Activated CD4-positive, alpha-beta memory T cell treated with anti-CD3 and anti-CD28 coated beads for 36 hours (primary cell): ENCODE measurements at regions of chr9 and their contacts with region 1.

Region 1: GRCh38 chr9:38620483-38621433 is at the start of gene ANKRD18A:
- DNase-seq: peak; percentile 88
- H3K4me3 Mint-ChIP-seq: peak within 1 kb of the TSS; percentile 80
- H3K27ac Mint-ChIP-seq: peak within 1 kb of the TSS; percentile 79
- H3K4me1 Mint-ChIP-seq: peaks cover 10% of the 10 kb centered on the region
- H3K27me3 Mint-ChIP-seq: peaks cover 2% of the 10 kb centered on the region
- total RNA-seq, gene ANKRD18A: 8.3 to 8.6 TPM

Region 2: DNA sequence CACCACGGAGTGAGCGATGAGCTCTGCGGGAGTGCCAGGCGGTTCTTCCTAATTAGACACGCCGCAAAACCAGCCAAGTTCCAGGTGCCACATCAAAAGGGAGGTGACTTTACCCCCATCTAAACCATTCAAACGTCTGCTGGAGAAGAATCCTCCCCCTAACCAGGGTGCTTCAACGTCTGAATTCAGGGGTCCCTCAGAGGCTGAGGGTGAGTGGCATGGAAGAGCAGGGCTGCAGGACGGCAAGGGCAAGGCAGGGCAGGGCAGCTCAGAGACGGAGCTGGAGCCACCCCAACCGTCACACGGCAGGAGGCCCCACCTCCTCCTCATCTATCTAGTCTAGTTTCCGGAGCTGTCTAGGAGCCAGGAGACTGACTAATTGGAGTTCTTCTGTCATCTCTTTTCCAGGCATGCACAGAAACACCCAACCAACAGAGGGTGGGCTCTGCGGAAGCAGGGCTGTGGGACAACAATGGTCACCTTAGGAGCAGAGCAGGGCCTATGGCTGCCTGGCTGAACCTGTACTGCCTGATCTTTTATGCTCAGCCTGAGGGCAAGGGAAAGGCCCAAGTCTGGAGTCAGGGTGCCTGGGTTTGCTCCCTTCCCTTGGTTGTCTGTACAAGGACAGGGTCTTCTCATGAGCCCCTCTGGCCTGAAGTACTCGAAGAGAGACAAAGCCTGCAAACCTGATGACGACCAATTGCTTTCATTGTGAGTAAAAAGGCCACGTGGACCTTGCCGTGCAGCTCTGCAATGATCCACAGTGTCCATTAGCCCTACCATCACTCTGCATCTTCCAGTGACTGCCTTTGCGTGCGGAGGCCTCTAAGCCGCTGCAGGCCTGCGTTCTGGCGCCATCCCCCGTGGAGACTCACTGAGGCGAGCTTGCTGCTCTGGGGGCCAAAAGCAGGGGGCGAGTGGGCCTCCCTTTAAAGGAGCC is 635.8 kb before region 1 on chr9:
- CTCF ChIA-PET with region 1: no interaction called
- POLR2A ChIA-PET with region 1: no interaction called
- intact Hi-C with region 1: no loop called
- DNase-seq: no peak
- H3K4me3 Mint-ChIP-seq: no peak overlapping the region
- H3K27ac Mint-ChIP-seq: no peak overlapping the region
- H3K4me1 Mint-ChIP-seq: no peaks in the 10 kb centered on the region
- H3K27me3 Mint-ChIP-seq: no peaks in the 10 kb centered on the region

Region 3: GRCh38 chr9:38641985-38642864 is 21.5 kb after region 1 on chr9:
- CTCF ChIA-PET with region 1: interaction called, 5 read pairs
- POLR2A ChIA-PET with region 1: no interaction called
- intact Hi-C with region 1: loop called (anchors 2 kb)
- DNase-seq: no peak
- H3K4me3 Mint-ChIP-seq: no peak overlapping the region
- H3K27ac Mint-ChIP-seq: no peak overlapping the region
- H3K4me1 Mint-ChIP-seq: no peaks in the 10 kb centered on the region
- H3K27me3 Mint-ChIP-seq: peaks cover 7% of the 10 kb centered on the region

Region 4: DNA sequence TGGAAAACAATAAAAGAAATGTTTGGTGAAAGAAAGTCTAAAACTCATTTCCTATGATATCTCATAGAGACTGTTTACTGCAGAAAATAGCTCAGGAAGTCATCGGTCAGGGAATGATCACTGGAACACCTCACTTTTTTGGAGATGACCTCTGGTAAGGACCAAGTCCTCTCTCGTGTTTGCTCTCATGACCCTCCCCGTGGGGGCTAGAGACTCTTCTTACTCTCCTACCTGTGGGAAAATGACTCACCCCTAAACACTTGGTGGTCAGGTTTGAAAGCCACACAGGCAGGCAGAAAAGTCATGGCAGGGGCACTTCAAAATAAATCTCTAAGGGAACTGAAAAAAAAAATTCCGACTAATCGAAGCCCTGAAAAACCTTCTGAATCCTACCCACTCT is 51.0 kb after region 1 on chr9:
- CTCF ChIA-PET with region 1: interaction called, 8 read pairs
- POLR2A ChIA-PET with region 1: no interaction called
- intact Hi-C with region 1: loop called (anchors 1 kb)
- DNase-seq: no peak
- H3K4me3 Mint-ChIP-seq: no peak overlapping the region
- H3K27ac Mint-ChIP-seq: no peak overlapping the region
- H3K4me1 Mint-ChIP-seq: peaks cover 6% of the 10 kb centered on the region
- H3K27me3 Mint-ChIP-seq: no peaks in the 10 kb centered on the region

Region 5: GRCh38 chr9:38756702-38757101 is 135.9 kb after region 1 on chr9:
- CTCF ChIA-PET with region 1: no interaction called
- POLR2A ChIA-PET with region 1: no interaction called
- intact Hi-C with region 1: no loop called
- DNase-seq: no peak
- H3K4me3 Mint-ChIP-seq: no peak overlapping the region
- H3K27ac Mint-ChIP-seq: no peak overlapping the region
- H3K4me1 Mint-ChIP-seq: no peaks in the 10 kb centered on the region
- H3K27me3 Mint-ChIP-seq: peaks cover 12% of the 10 kb centered on the region